GM12878 (cell line): ENCODE measurements at regions of chr15 and their contacts with region 1.

Region 1: DNA sequence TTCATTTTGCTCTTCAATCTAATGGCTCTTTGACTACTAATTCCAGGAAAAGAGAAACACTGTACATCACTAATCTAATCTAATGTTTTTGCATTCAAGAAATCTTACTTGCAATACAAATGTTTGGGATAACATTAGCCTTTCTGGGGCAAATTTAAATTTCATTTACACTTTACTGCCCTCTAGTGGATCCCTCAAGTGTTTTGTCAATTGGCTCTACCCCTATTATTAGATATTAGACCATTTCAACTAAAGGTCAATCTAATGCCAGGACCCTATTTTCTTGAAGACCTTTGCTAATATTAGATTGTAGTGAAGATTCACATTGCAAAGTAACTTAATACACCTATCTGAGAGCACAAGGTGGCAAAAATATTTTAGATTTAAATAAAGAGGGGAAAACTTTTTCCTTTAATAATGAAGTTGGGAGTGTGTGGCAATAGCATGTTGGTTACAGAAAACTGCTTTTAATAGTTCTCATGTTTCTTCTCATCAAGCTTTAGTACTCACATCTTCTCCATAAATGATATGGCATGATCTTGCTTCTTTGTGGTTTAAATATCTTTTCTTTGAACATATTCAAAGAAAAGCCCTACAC is 5.0 kb downstream of the C2CD4A start:
- DNase-seq: no peak
- ATAC-seq: peak; percentile 39; the same call in 2 of the 3 replicates
- H3K4me3 ChIP-seq: no peak overlapping the region
- H3K27ac ChIP-seq: no peak overlapping the region
- H3K4me1 ChIP-seq: peaks cover 8% of the 10 kb centered on the region
- H3K27me3 ChIP-seq: peaks cover 8% of the 10 kb centered on the region in 2 experiments
- CTCF ChIP-seq: peak; percentile 48 to 62 (median 57); a peak in 5 of 6 replicates
- EP300 ChIP-seq: no peak
- POLR2A ChIP-seq: no peak
- RAD21 ChIP-seq: peak; percentile 68

Region 2: GRCh38 chr15:61871926-61872522 is 199.8 kb before region 1 on chr15:
- CTCF ChIA-PET with region 1: interaction called, 12 read pairs
- POLR2A ChIA-PET with region 1: no interaction called
- RAD21 ChIA-PET with region 1: interaction called, 3 read pairs
- SMC1A ChIA-PET with region 1: interaction called, 12 read pairs
- in situ Hi-C with region 1: loop called (anchors 5 kb)
- intact Hi-C with region 1: loop called (anchors 2 kb)
- DNase-seq: no peak
- ATAC-seq: peak; percentile 61
- H3K4me3 ChIP-seq: no peak overlapping the region
- H3K27ac ChIP-seq: no peak overlapping the region
- H3K4me1 ChIP-seq: no peaks in the 10 kb centered on the region
- H3K27me3 ChIP-seq: no peaks in the 10 kb centered on the region
- CTCF ChIP-seq: peak; percentile 23 to 54 (median 43); a peak in 3 of 6 replicates
- EP300 ChIP-seq: no peak
- POLR2A ChIP-seq: no peak
- RAD21 ChIP-seq: peak; percentile 43; the same call in 1 of the 2 replicates

Region 3: GRCh38 chr15:61879219-61879618 is 192.6 kb before region 1 on chr15:
- CTCF ChIA-PET with region 1: interaction called, 12 read pairs
- POLR2A ChIA-PET with region 1: no interaction called
- RAD21 ChIA-PET with region 1: no interaction called
- SMC1A ChIA-PET with region 1: interaction called, 3 read pairs
- in situ Hi-C with region 1: loop called (anchors 5 kb)
- intact Hi-C with region 1: no loop called
- DNase-seq: no peak
- ATAC-seq: no peak
- H3K4me3 ChIP-seq: no peak overlapping the region
- H3K27ac ChIP-seq: no peak overlapping the region
- H3K4me1 ChIP-seq: no peaks in the 10 kb centered on the region
- H3K27me3 ChIP-seq: no peaks in the 10 kb centered on the region
- CTCF ChIP-seq: no peak
- EP300 ChIP-seq: no peak
- POLR2A ChIP-seq: no peak
- RAD21 ChIP-seq: no peak

Region 4: GRCh38 chr15:61997786-61998185 is 74.0 kb before region 1 on chr15:
- CTCF ChIA-PET with region 1: interaction called, 3 read pairs
- POLR2A ChIA-PET with region 1: no interaction called
- RAD21 ChIA-PET with region 1: no interaction called
- SMC1A ChIA-PET with region 1: no interaction called
- in situ Hi-C with region 1: no loop called
- intact Hi-C with region 1: loop called (anchors 5 kb)
- DNase-seq: no peak
- ATAC-seq: no peak
- H3K4me3 ChIP-seq: no peak overlapping the region
- H3K27ac ChIP-seq: no peak overlapping the region
- H3K4me1 ChIP-seq: no peaks in the 10 kb centered on the region
- H3K27me3 ChIP-seq: no peaks in the 10 kb centered on the region
- CTCF ChIP-seq: no peak
- EP300 ChIP-seq: no peak
- POLR2A ChIP-seq: no peak
- RAD21 ChIP-seq: no peak

Region 5: GRCh38 chr15:62026487-62027262 is 45.1 kb before region 1 on chr15:
- CTCF ChIA-PET with region 1: interaction called, 13 read pairs
- POLR2A ChIA-PET with region 1: interaction called, 4 read pairs
- RAD21 ChIA-PET with region 1: no interaction called
- SMC1A ChIA-PET with region 1: interaction called, 3 read pairs
- in situ Hi-C with region 1: no loop called
- intact Hi-C with region 1: no loop called
- DNase-seq: no peak
- ATAC-seq: peak; percentile 94
- H3K4me3 ChIP-seq: no peak overlapping the region
- H3K27ac ChIP-seq: peak overlapping the region; percentile 54; the same call in 1 of the 2 replicates
- H3K4me1 ChIP-seq: peaks cover 21% of the 10 kb centered on the region; the same call in 1 of the 2 replicates
- H3K27me3 ChIP-seq: no peaks in the 10 kb centered on the region
- CTCF ChIP-seq: no peak
- EP300 ChIP-seq: no peak; a peak in 1 of 4 replicates
- POLR2A ChIP-seq: no peak
- RAD21 ChIP-seq: no peak

Region 6: GRCh38 chr15:62306851-62307504 is 235.2 kb after region 1 on chr15:
- CTCF ChIA-PET with region 1: interaction called, 17 read pairs
- POLR2A ChIA-PET with region 1: no interaction called
- RAD21 ChIA-PET with region 1: interaction called, 3 read pairs
- SMC1A ChIA-PET with region 1: interaction called, 7 read pairs
- in situ Hi-C with region 1: no loop called
- intact Hi-C with region 1: loop called (anchors 10 kb)
- DNase-seq: no peak
- ATAC-seq: peak; percentile 86
- H3K4me3 ChIP-seq: no peak overlapping the region
- H3K27ac ChIP-seq: no peak overlapping the region
- H3K4me1 ChIP-seq: no peaks in the 10 kb centered on the region
- H3K27me3 ChIP-seq: no peaks in the 10 kb centered on the region
- CTCF ChIP-seq: peak; percentile 45 to 62 (median 52); a peak in 4 of 6 replicates
- EP300 ChIP-seq: no peak
- POLR2A ChIP-seq: no peak
- RAD21 ChIP-seq: peak; percentile 50

Region 7: GRCh38 chr15:62444104-62445022 is 372.6 kb after region 1 on chr15:
- CTCF ChIA-PET with region 1: no interaction called
- POLR2A ChIA-PET with region 1: no interaction called
- RAD21 ChIA-PET with region 1: no interaction called
- SMC1A ChIA-PET with region 1: no interaction called
- in situ Hi-C with region 1: no loop called
- intact Hi-C with region 1: no loop called
- DNase-seq: no peak
- ATAC-seq: no peak
- H3K4me3 ChIP-seq: no peak overlapping the region
- H3K27ac ChIP-seq: no peak overlapping the region
- H3K4me1 ChIP-seq: no peaks in the 10 kb centered on the region
- H3K27me3 ChIP-seq: peaks cover 0 to 2% of the 10 kb centered on the region in 2 experiments; a peak in 1 of 4 replicates
- CTCF ChIP-seq: no peak
- EP300 ChIP-seq: no peak
- POLR2A ChIP-seq: no peak
- RAD21 ChIP-seq: no peak